ENCODE measurements at regions of chr1 and their contacts with region 1.

Region 1: GRCh38 chr1:228082135-228082891 is at the start of gene ARF1:
- DNase-seq: peak; percentile 96
- H3K4me3 ChIP-seq: peak within 1 kb of the TSS; percentile 77 to 99 (median 90)
- H3K27ac ChIP-seq: peak within 1 kb of the TSS; percentile 94 to 99 (median 98)
- H3K4me1 ChIP-seq: peaks cover 1 to 60% (median 52%) of the 10 kb centered on the region in 4 donors
- H3K27me3 ChIP-seq: no peaks in the 10 kb centered on the region
- CTCF ChIP-seq: no peak
- EP300 ChIP-seq: no peak
- POLR2A ChIP-seq: peak; percentile 38 to 46
- total RNA-seq, gene ARF1: 212 to 250 (median 225) TPM

Region 2: DNA sequence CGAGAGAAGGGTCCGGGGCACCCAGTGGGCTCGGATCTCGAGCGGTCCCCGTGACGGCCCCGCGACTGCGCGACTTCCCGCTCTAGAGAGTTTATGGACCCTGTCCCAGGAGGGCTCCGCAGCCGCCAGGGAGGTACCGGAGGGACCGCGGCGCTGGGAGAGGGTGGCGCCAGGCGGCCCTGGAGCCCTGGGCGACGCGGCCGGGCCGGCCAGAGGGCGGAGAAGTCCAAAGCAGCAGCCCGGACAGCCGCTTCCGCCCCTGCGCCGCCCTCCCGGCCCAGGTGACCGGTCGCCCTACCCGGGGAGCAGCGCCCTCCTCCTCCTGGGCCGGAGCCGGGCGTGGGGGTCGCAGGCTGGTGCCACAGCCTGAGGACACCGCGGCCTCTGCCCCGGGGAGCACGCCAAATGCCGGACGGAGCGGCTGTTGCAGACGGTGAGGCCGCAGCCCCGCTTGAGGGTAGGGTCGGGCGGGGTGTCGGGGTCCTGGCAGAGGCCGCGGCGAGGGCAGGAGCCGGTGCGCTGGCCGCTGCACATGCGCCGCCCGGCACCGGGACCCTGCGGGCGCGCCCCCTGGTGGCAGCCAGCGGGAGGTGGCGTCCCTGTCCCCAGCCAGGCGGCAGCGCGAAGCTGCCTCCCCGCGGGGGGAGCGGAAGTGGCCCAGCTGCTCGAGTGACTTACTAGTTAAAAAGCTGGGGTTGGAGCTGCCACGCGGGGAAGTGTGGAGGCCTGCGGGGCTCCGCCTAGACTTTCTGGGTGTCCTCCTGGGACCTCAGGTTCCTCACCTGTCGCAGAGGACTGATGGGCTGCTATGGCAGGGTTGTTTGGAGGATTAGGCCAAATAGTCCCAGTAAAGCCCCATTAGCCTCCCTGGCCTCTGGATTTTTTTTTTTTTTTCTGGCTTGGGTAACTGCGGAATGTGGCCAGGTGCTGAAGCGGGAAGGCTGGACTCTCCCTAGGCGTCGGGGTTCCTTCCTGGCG is 539.9 kb before region 1 on chr1:
- intact Hi-C with region 1: loop called (anchors 10 kb)
- DNase-seq: peak; percentile 94
- H3K4me3 ChIP-seq: peak overlapping the region; percentile 63 to 90 (median 77)
- H3K27ac ChIP-seq: peak overlapping the region; percentile 69 to 82 (median 76)
- H3K4me1 ChIP-seq: peaks cover 0 to 19% (median 17%) of the 10 kb centered on the region in 4 donors
- H3K27me3 ChIP-seq: no peaks in the 10 kb centered on the region
- CTCF ChIP-seq: peak; percentile 38 to 99 (median 63)
- EP300 ChIP-seq: no peak
- POLR2A ChIP-seq: no peak

Region 3: DNA sequence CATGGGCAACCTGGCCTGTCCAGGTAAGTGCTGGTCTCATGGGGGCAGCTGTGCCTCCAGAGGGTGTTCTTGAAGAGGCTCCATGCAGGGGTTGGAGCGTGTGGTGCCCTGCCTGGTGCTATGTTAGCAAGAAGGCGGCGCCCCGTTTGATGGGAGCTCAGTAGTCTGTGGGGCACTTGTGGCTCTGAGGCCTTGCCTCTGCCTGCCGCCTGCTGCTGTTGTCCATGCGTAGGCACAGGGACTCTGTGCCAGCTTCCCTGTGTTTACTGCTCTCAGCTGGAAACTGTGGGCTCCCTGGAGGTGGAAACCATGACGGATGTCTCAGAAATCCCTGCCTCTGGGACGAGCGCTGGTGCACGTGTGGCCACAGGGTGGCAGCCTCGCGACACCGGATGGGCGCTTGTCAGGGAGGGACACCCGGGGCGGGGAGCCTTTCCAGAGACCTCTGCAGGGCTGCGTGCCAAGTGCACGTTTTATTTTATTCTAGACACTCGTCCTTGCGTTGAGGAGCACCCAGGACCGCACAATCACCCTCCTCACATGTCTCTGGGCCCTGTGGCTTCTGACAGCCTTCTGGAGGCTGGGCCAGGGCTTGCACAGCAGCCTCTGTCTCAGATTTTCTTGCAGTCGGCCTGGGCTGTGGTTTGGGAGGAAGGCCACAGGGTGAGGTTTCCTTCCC is 319.9 kb before region 1 on chr1:
- intact Hi-C with region 1: loop called (anchors 5 kb)
- DNase-seq: peak; percentile 96
- H3K4me3 ChIP-seq: no peak overlapping the region
- H3K27ac ChIP-seq: peak overlapping the region; percentile 54 to 89 (median 75)
- H3K4me1 ChIP-seq: peaks cover 0 to 59% (median 56%) of the 10 kb centered on the region in 4 donors
- H3K27me3 ChIP-seq: no peaks in the 10 kb centered on the region
- CTCF ChIP-seq: peak; percentile 77 to 94 (median 88)
- EP300 ChIP-seq: no peak
- POLR2A ChIP-seq: no peak

Region 4: DNA sequence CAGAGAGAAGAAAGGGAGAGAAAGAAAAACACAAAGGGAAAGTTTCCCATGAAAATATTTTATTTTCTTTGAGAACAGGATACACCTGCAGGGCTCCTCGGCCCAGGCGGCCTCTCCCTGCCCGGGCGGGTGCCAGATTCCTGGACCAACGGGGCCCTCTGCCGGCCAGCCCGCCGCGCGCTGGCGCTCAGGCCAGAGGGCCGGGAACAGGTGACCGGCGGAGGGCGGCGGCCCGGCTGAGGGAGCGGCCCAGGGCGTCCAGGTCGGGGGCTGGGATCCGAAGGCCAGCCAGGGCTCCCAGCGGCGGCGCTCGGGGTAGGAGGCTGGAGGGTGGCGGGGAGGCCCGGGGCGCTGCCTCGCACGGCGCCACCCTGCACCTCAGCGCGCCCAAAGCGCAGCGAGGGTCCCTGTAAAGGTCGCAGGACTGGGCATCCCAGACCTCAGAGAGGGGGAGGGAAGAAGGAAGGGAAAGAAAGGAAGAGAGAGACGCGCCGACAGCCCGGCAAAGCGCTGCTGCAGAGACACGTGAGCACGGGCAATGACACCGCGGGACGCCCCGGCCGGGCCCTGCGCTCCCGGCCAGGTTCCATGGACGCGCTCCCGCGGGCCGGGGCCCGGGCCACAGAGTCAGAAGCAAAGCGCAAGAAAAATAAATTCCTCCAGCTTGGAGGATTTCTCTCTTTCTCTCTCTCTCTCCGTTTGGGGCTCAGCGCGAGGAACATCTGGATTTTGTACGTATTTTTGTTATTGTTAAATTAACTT is 135.5 kb before region 1 on chr1:
- intact Hi-C with region 1: loop called (anchors 2 kb)
- DNase-seq: peak; percentile 92
- H3K4me3 ChIP-seq: peak overlapping the region; percentile 35 to 75 (median 72)
- H3K27ac ChIP-seq: peak overlapping the region; percentile 84 to 97 (median 93)
- H3K4me1 ChIP-seq: peaks cover 7 to 67% (median 65%) of the 10 kb centered on the region in 4 donors
- H3K27me3 ChIP-seq: no peaks in the 10 kb centered on the region
- CTCF ChIP-seq: peak; percentile 39 to 80 (median 54)
- EP300 ChIP-seq: no peak
- POLR2A ChIP-seq: no peak

Region 5: DNA sequence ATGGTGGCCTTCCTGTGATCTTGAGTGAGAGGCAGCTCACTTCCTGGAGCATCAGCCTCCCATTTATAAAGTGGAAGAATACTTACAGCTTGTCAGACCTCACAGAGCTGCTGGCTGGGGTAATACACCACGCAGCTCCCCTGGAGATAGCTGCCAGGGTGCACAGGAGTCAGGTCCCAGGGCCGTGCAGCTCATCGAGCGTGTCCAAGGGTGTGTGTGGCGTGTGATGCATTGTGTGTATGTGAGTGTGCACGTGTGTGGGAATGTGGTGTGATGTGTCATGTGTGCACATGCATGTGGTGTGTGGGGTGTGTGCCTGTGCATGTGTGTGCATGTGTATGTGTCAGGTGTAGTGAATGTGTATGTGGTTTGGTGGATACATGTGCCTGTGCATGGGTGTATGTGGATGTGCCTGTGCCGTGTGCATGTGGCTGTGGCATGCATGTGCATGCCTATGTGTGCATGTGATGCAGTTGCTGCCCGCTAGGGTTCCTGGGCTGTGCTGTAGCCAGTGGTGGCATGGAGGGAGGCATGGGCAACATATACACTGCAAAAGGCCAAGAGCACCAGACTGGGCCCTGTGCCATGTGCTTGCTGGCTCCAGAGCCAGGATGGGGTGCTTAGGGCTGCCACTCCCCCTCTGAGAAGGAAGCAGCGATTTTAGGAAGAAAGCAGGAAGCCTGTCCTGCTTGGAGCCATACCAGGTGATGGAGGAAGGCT is 50.9 kb before region 1 on chr1:
- intact Hi-C with region 1: no loop called
- DNase-seq: no peak
- H3K4me3 ChIP-seq: no peak overlapping the region
- H3K27ac ChIP-seq: no peak overlapping the region
- H3K4me1 ChIP-seq: no peaks in the 10 kb centered on the region
- H3K27me3 ChIP-seq: peaks cover 0 to 13% (median 0%) of the 10 kb centered on the region in 3 donors
- CTCF ChIP-seq: no peak
- EP300 ChIP-seq: no peak
- POLR2A ChIP-seq: no peak

Region 6: GRCh38 chr1:228165372-228166169 is 83.3 kb after region 1 on chr1 and contains the start of gene IBA57:
- intact Hi-C with region 1: loop called (anchors 2 kb)
- DNase-seq: peak; percentile 100
- H3K4me3 ChIP-seq: peak within 1 kb of the TSS; percentile 69 to 83 (median 78)
- H3K27ac ChIP-seq: peak within 1 kb of the TSS; percentile 94 to 100 (median 98)
- H3K4me1 ChIP-seq: peaks cover 0 to 30% (median 24%) of the 10 kb centered on the region in 4 donors
- H3K27me3 ChIP-seq: peaks cover 3 to 23% (median 10%) of the 10 kb centered on the region in 3 donors
- CTCF ChIP-seq: peak; percentile 64 to 92 (median 80)
- EP300 ChIP-seq: peak in 2 of 4 donors; percentile 84 to 99
- POLR2A ChIP-seq: no peak
- total RNA-seq, gene IBA57: 2.9 to 14.0 (median 7.3) TPM

Region 7: DNA sequence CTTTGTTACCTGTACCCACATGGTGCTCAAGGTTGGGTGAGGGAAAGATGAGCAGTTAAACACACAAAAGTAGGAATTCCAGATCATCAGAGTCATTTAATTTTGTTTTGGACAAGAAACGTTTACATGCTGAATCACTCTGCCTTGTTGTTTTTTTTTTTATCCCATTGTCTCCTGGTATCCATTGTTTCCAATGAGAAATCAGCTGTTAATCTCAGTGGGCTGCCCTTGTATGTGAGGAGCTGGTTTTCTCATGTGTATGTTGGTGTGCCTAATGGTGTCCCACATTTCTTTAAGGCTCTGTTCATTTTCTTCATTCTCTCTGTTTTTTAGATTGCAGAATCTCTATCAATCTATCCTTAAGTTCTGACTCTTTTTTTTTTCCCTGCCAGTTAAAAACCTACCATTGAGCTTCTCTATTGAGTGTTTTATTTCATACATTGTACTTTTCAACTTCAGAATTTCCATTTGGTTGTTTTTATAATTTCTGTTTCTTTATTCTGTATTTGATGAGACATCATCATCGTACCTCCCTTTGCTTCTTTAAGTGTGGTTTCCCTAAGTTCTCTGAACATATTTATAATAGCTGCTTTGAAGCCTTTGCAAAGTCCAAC is 116.8 kb after region 1 on chr1:
- intact Hi-C with region 1: no loop called
- DNase-seq: no peak
- H3K4me3 ChIP-seq: no peak overlapping the region
- H3K27ac ChIP-seq: no peak overlapping the region
- H3K4me1 ChIP-seq: no peaks in the 10 kb centered on the region
- H3K27me3 ChIP-seq: no peaks in the 10 kb centered on the region
- CTCF ChIP-seq: no peak
- EP300 ChIP-seq: no peak
- POLR2A ChIP-seq: no peak